AG04449 (cell line): ENCODE measurements at regions of chr9 and their contacts with region 1.

Region 1: DNA sequence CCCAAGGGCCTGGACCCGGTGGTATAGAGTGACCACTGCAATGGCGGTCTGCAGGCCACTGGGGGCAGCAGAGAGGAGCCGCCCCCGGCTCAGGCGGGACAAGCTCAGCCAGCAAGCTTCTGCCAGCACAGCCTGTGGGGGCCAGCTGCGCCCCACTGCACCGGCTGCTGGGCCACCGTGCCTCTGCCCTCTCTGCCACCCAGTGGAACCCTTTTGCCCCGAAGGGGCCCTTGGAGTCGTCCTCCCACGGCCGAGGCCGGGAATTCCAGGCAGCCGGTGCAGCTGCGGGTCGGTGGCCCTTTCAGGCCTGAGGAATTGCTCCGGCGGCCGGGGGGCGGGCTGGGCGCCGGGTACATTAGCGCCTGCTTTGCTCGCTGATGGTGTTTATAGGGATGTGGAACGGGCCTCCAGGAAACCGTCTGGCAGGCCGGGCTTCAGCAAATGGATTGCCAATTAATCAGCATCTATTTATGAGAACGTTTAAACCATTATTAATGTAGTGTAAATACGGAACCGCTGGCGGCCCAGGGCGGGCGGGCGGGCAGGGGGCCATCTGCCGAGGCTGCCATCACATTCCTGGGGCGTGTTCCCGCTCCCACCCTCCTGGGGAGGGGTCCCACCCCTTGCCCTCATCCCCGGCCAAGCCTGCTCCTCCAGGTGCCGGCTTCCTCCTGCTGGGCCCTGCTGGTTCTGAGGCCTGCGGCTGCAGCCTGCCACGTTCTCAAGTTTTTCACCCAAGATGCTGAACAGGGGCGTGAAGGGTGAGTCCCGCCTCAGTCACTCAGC is 127.4 kb downstream of the BARX1 start:
- DNase-seq: no peak
- H3K4me3 ChIP-seq: no peak overlapping the region; the same call in 1 of the 2 replicates
- CTCF ChIP-seq: peak; percentile 92

Region 2: GRCh38 chr9:93810028-93810971 is 17.4 kb before region 1 on chr9:
- CTCF ChIA-PET with region 1: interaction called, 10 read pairs
- POLR2A ChIA-PET with region 1: no interaction called
- DNase-seq: no peak
- H3K4me3 ChIP-seq: no peak overlapping the region
- CTCF ChIP-seq: no peak

Region 3: GRCh38 chr9:93843396-93843795 is 15.7 kb after region 1 on chr9:
- CTCF ChIA-PET with region 1: interaction called, 12 read pairs
- POLR2A ChIA-PET with region 1: no interaction called
- DNase-seq: no peak
- H3K4me3 ChIP-seq: no peak overlapping the region
- CTCF ChIP-seq: no peak